ENCODE measurements at regions of chr17 and their contacts with region 1.

Region 1: GRCh38 chr17:71681427-71682173 is 439.2 kb upstream of the SOX9 start:
- DNase-seq: no peak
- H3K4me3 ChIP-seq: no peak overlapping the region
- H3K27ac ChIP-seq: no peak overlapping the region
- H3K4me1 ChIP-seq: no peaks in the 10 kb centered on the region
- H3K27me3 ChIP-seq: no peaks in the 10 kb centered on the region
- CTCF ChIP-seq: no peak
- POLR2A ChIP-seq: no peak

Region 2: GRCh38 chr17:71726341-71726740 is 44.7 kb after region 1 on chr17:
- intact Hi-C with region 1: loop called (anchors 2 kb)
- DNase-seq: no peak
- H3K4me3 ChIP-seq: peak overlapping the region in 1 of 3 donors; percentile 20
- H3K27ac ChIP-seq: no peak overlapping the region
- H3K4me1 ChIP-seq: no peaks in the 10 kb centered on the region
- H3K27me3 ChIP-seq: no peaks in the 10 kb centered on the region
- CTCF ChIP-seq: no peak
- POLR2A ChIP-seq: no peak

Measured in breast epithelium (tissue), 4 donors.